Gastrocnemius medialis (tissue), 4 donors: ENCODE measurements at regions of chr13 and their contacts with region 1.

Region 1: GRCh38 chr13:70375718-70376117 is 267.5 kb upstream of the KLHL1 start:
- DNase-seq: no peak
- ATAC-seq: no peak
- H3K4me3 ChIP-seq: no peak overlapping the region
- H3K27ac ChIP-seq: no peak overlapping the region
- H3K4me1 ChIP-seq: no peaks in the 10 kb centered on the region
- H3K27me3 ChIP-seq: no peaks in the 10 kb centered on the region
- CTCF ChIP-seq: no peak
- POLR2A ChIP-seq: no peak

Region 2: GRCh38 chr13:70235565-70235964 is 140.2 kb before region 1 on chr13:
- in situ Hi-C with region 1: no loop called
- intact Hi-C with region 1: no loop called
- DNase-seq: no peak
- ATAC-seq: no peak
- H3K4me3 ChIP-seq: no peak overlapping the region
- H3K27ac ChIP-seq: no peak overlapping the region
- H3K4me1 ChIP-seq: no peaks in the 10 kb centered on the region
- H3K27me3 ChIP-seq: no peaks in the 10 kb centered on the region
- CTCF ChIP-seq: no peak
- POLR2A ChIP-seq: no peak

Region 3: GRCh38 chr13:70310396-70311119 is 65.2 kb before region 1 on chr13:
- in situ Hi-C with region 1: loop called in 1 of 4 experiments (anchors 10 kb)
- intact Hi-C with region 1: no loop called
- DNase-seq: no peak
- ATAC-seq: no peak
- H3K4me3 ChIP-seq: no peak overlapping the region
- H3K27ac ChIP-seq: no peak overlapping the region
- H3K4me1 ChIP-seq: no peaks in the 10 kb centered on the region
- H3K27me3 ChIP-seq: no peaks in the 10 kb centered on the region
- CTCF ChIP-seq: no peak
- POLR2A ChIP-seq: no peak